ENCODE measurements at regions of chr16 and their contacts with region 1.

Region 1: GRCh38 chr16:67428146-67428731 is 2.7 kb upstream of the HSD11B2 start:
- DNase-seq: peak; percentile 82
- H3K4me3 ChIP-seq: no peak overlapping the region
- H3K27ac ChIP-seq: no peak overlapping the region
- H3K4me1 ChIP-seq: peaks cover 0 to 12% of the 10 kb centered on the region in 2 experiments; a peak in 1 of 4 replicates
- H3K27me3 ChIP-seq: no peaks in the 10 kb centered on the region; the same call in 1 of the 2 replicates
- CTCF ChIP-seq: peak; percentile 70
- EP300 ChIP-seq: no peak
- RAD21 ChIP-seq: peak; percentile 75

Region 2: DNA sequence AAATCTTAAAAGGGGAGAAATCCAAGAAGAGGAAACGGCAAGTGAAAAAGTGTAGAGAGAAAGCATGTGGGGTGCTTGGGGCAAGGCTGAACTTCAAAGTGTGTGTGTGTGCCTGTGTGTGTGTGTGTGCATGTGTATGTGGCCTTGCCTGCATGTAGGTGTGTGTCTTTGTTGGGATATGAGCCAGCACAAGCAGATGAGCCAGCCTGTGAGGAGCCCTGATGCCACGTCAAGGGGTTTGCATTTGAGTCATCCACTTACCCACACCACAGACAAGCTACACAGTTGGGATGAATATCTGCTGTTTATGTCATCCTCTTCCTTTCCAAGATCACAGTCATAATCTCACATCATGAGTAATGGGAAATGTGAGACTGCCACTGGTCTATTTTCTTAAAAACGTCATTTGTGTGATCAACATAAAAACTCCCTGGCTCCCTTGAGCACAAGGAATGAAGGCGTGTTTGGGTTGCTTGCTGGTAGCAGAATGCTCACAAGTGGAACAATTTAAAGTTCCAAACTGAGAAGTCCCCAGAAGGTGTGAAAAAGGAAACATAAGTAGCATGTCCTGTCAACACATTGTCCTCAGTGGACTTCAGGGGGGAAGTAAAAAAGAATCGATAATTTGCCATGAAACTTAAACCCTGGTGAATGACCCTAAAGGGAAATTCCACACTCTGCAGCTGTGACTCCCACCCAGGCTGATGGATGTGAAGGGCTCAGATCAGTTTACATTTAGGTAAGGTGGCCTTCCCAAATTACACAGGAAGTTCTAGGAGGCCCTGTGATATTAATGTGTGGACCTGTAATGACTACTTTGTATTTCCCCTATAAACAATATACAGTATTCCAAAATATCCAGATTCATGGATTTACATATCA is 116.4 kb before region 1 on chr16:
- CTCF ChIA-PET with region 1: no interaction called
- POLR2A ChIA-PET with region 1: no interaction called
- DNase-seq: peak; percentile 21
- H3K4me3 ChIP-seq: no peak overlapping the region
- H3K27ac ChIP-seq: peak overlapping the region in 1 of 2 experiments; percentile 93; a peak in 2 of 4 replicates
- H3K4me1 ChIP-seq: peaks cover 0 to 13% of the 10 kb centered on the region in 2 experiments; a peak in 1 of 4 replicates
- H3K27me3 ChIP-seq: no peaks in the 10 kb centered on the region
- CTCF ChIP-seq: no peak
- EP300 ChIP-seq: peak in 1 of 2 experiments; percentile 62; a peak in 1 of 4 replicates
- RAD21 ChIP-seq: no peak

Region 3: GRCh38 chr16:67384778-67385510 is 43.3 kb before region 1 on chr16:
- CTCF ChIA-PET with region 1: interaction called, 11 read pairs
- POLR2A ChIA-PET with region 1: no interaction called
- DNase-seq: no peak
- H3K4me3 ChIP-seq: no peak overlapping the region
- H3K27ac ChIP-seq: peak overlapping the region in 1 of 2 experiments; percentile 60; a peak in 2 of 4 replicates
- H3K4me1 ChIP-seq: peaks cover 4 to 10% of the 10 kb centered on the region in 2 experiments; a peak in 2 of 4 replicates
- H3K27me3 ChIP-seq: no peaks in the 10 kb centered on the region
- CTCF ChIP-seq: no peak
- EP300 ChIP-seq: no peak
- RAD21 ChIP-seq: no peak

Region 4: DNA sequence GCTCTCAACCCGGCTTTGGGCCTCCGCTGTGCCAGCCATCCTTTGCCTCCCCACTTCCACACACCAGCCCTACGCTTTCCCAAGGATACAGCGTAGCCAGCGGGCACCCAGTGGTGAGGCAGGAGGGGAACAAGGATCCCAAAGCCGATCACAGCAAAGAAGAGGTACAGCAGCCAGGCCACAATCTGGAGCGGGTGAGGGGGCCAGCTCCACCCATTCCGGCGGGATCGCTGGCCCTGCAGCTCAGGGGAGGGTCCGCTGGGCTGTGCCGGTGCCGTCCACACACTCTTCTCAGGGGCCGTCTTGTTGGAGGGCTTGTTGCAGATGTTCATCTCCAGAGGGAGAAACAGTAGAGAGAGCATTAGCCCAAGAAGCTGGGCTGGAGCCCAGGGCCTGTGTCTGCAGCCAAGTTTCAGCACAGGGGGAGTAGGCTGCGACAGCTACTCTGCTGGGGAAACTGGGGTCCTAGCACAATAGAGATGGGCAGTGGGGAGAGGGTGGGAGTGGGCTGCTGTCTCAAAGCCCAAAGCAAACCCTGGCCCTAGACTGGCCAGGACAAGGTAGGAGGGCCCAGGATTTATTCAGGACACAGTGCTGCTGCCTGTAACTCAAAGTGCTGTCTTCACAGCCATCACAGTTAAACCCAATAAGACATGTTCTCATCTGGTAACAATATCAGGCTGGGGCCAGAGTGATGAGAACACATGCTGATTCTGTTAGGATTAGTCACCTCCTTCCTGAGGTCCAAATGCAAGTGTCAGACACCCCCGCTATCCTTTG is 21.9 kb before region 1 on chr16:
- CTCF ChIA-PET with region 1: no interaction called
- POLR2A ChIA-PET with region 1: no interaction called
- DNase-seq: peak; percentile 54
- H3K4me3 ChIP-seq: no peak overlapping the region
- H3K27ac ChIP-seq: peak overlapping the region; percentile 78 to 98
- H3K4me1 ChIP-seq: peaks cover 21 to 30% of the 10 kb centered on the region in 2 experiments; a peak in 3 of 4 replicates
- H3K27me3 ChIP-seq: no peaks in the 10 kb centered on the region
- CTCF ChIP-seq: no peak
- EP300 ChIP-seq: no peak
- RAD21 ChIP-seq: no peak

Region 5: DNA sequence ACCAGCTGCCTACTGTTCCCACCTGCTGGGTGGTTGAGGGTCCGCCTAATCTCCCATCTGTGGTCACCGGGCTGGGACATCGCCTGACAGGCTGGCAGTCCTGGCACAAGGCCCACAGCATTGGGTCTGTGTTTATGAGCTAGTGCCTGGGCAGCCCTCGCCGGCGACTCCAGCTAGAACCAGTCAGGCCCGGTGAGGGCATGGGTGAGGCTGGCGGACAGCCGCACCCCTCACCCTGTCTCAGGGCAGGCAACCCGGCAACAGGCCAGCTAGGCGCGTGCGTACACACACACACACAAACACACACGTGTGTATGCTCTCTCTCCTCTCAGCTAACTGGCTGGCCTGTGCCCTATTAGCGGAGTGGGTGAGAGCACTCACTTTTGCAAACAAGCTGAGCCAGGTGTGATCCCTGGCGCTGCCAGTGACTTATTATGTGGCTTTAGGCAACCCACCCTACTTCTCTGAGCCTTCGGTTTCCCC is 13.1 kb after region 1 on chr16:
- CTCF ChIA-PET with region 1: interaction called, 31 read pairs
- POLR2A ChIA-PET with region 1: interaction called, 4 read pairs
- DNase-seq: peak; percentile 36
- H3K4me3 ChIP-seq: no peak overlapping the region
- H3K27ac ChIP-seq: no peak overlapping the region; a peak in 1 of 4 replicates
- H3K4me1 ChIP-seq: peaks cover 0 to 32% of the 10 kb centered on the region in 2 experiments; a peak in 1 of 4 replicates
- H3K27me3 ChIP-seq: no peaks in the 10 kb centered on the region
- CTCF ChIP-seq: no peak
- EP300 ChIP-seq: no peak
- RAD21 ChIP-seq: no peak

Region 6: GRCh38 chr16:67456391-67457081 is 28.3 kb after region 1 on chr16:
- CTCF ChIA-PET with region 1: interaction called, 76 read pairs
- POLR2A ChIA-PET with region 1: no interaction called
- DNase-seq: peak; percentile 51
- H3K4me3 ChIP-seq: no peak overlapping the region
- H3K27ac ChIP-seq: peak overlapping the region in 1 of 2 experiments; percentile 36; a peak in 1 of 4 replicates
- H3K4me1 ChIP-seq: peaks cover 14 to 49% of the 10 kb centered on the region in 2 experiments; a peak in 3 of 4 replicates
- H3K27me3 ChIP-seq: no peaks in the 10 kb centered on the region
- CTCF ChIP-seq: peak; percentile 54
- EP300 ChIP-seq: no peak
- RAD21 ChIP-seq: no peak

Region 7: DNA sequence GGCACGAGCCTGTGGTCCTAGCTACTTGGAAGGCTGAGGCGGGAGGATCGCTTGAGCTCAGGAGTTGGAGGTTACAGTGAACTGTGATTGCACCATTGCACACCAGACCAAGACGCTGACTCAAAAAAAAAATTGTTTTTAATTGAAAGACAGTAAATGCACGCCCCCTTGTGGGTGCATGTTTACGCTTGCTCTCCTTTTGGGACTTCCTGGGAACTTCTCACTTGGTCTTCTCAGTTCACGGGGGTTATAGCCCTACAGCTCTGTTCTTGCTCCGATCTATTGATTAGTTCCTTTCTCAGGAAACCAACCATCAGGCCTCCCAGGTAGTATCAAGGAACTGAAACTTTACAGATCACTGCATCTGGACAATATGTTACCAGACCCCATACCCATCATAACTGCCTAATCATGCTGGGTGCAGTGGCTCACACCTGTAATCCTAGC is 86.2 kb after region 1 on chr16:
- CTCF ChIA-PET with region 1: interaction called, 10 read pairs
- POLR2A ChIA-PET with region 1: no interaction called
- DNase-seq: peak; percentile 61
- H3K4me3 ChIP-seq: no peak overlapping the region; a peak in 1 of 4 replicates
- H3K27ac ChIP-seq: no peak overlapping the region
- H3K4me1 ChIP-seq: peaks cover 0 to 11% of the 10 kb centered on the region in 2 experiments; a peak in 1 of 4 replicates
- H3K27me3 ChIP-seq: no peaks in the 10 kb centered on the region
- CTCF ChIP-seq: peak; percentile 82
- EP300 ChIP-seq: no peak
- RAD21 ChIP-seq: peak; percentile 74

Region 8: GRCh38 chr16:67632415-67633172 is 204.4 kb after region 1 on chr16:
- CTCF ChIA-PET with region 1: no interaction called
- POLR2A ChIA-PET with region 1: no interaction called
- DNase-seq: no peak
- H3K4me3 ChIP-seq: no peak overlapping the region
- H3K27ac ChIP-seq: no peak overlapping the region
- H3K4me1 ChIP-seq: no peaks in the 10 kb centered on the region
- H3K27me3 ChIP-seq: no peaks in the 10 kb centered on the region
- CTCF ChIP-seq: no peak
- EP300 ChIP-seq: no peak
- RAD21 ChIP-seq: no peak

Region 9: DNA sequence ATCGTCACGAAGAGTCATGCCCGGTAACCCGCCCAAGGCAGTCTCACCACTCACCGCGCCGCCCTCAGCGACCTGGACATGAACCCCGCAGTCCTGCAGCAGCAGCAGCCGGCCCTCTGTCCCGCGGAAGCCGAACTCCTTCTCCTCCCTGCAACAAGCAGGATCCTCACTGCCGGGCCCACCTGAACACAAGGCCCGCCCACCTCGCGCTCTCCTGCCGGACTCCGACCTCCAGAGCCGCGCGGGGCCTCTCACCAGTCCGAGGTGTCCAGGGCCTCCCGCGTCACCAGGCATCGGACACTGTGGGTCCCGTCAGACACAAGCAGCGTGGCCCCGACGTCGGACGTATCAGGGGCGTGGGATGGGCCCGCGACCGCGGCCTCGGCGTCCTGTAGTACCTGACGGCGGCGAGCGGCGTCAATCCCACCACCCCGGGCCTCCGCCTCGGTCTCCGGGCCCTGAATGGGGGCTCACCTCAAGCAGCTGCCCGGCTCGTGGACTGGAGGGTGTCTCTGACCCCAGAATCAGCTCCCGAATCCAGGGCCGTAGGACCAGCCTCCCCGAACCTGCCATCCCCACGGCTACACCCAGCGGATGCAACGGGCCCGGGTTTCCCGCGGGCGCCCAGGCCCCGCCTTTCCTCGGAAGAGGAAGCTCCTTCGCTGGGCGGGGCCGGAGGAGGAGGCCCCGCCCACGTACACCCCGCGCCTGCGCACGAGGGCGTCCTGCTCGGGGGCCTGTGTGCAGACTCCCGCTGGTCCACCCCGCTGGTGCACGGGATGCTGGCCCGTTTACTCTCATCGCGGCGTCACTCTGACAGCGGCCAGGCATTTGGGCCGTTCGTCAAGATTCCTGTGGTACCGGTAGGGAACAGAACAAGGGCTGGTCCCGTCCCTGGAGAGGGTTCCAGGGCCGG is 231.7 kb after region 1 on chr16 and contains the start of gene ACD:
- CTCF ChIA-PET with region 1: no interaction called
- POLR2A ChIA-PET with region 1: no interaction called
- DNase-seq: peak; percentile 99
- H3K4me3 ChIP-seq: peak within 1 kb of the TSS; percentile 87 to 97
- H3K27ac ChIP-seq: peak within 1 kb of the TSS; percentile 94 to 95
- H3K4me1 ChIP-seq: peaks cover 0 to 22% of the 10 kb centered on the region in 2 experiments; a peak in 1 of 4 replicates
- H3K27me3 ChIP-seq: no peaks in the 10 kb centered on the region
- CTCF ChIP-seq: no peak
- EP300 ChIP-seq: no peak
- RAD21 ChIP-seq: no peak
- polyA plus RNA-seq, gene ACD: 31.3 and 37.8 TPM in 2 replicates